ENCODE measurements at regions of chr6 and their contacts with region 1.

Region 1: DNA sequence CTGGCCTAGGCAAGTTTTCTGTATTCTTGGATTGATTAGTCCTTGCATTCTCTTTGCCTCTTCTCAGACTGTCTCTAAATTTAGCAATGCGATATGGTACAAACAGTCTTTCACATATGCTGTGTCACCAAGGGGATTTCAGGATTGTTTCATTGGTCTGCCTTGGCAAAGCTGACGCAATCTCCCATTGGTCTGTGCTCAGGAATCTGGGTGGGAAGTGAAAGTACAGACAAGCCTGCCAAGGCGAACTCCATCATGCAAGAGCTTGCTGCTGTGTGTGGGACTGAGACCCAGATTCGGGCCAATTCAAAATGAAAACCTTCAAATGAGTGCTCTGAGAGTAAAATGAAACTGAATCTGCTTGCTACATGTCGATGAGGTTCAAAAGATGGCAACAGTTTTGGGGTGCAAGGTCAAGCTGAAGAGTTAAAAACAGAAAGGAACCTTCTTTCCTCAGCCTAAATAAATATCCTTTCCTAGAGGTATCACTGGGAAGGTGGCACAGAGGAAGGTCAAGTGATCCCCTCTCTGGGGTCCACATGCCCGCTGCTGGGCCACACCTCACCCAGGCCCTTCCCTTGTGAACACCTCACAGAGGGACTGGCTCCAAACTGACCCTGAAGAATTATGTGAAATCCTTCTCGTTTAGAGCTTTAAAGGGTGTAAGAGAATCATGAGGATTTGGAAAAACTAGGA is 198.8 kb upstream of the PREP start:
- DNase-seq: peak; percentile 100
- H3K4me3 ChIP-seq: no peak overlapping the region
- H3K27ac ChIP-seq: peak overlapping the region; percentile 100
- H3K4me1 ChIP-seq: peaks cover 39% of the 10 kb centered on the region
- H3K27me3 ChIP-seq: no peaks in the 10 kb centered on the region
- CTCF ChIP-seq: no peak

Region 2: GRCh38 chr6:105522626-105523322 is 78.9 kb before region 1 on chr6:
- CTCF ChIA-PET with region 1: no interaction called
- dilution Hi-C with region 1: no loop called
- in situ Hi-C with region 1: no loop called
- intact Hi-C with region 1: loop called (anchors 1 kb)
- DNase-seq: peak; percentile 70
- H3K4me3 ChIP-seq: no peak overlapping the region
- H3K27ac ChIP-seq: peak overlapping the region; percentile 44
- H3K4me1 ChIP-seq: peaks cover 9% of the 10 kb centered on the region
- H3K27me3 ChIP-seq: no peaks in the 10 kb centered on the region
- CTCF ChIP-seq: no peak

Region 3: GRCh38 chr6:105648276-105648675 is 46.6 kb after region 1 on chr6:
- CTCF ChIA-PET with region 1: no interaction called
- dilution Hi-C with region 1: no loop called
- in situ Hi-C with region 1: no loop called
- intact Hi-C with region 1: no loop called
- DNase-seq: no peak
- H3K4me3 ChIP-seq: no peak overlapping the region
- H3K27ac ChIP-seq: no peak overlapping the region
- H3K4me1 ChIP-seq: peaks cover 11% of the 10 kb centered on the region
- H3K27me3 ChIP-seq: no peaks in the 10 kb centered on the region
- CTCF ChIP-seq: no peak

Region 4: DNA sequence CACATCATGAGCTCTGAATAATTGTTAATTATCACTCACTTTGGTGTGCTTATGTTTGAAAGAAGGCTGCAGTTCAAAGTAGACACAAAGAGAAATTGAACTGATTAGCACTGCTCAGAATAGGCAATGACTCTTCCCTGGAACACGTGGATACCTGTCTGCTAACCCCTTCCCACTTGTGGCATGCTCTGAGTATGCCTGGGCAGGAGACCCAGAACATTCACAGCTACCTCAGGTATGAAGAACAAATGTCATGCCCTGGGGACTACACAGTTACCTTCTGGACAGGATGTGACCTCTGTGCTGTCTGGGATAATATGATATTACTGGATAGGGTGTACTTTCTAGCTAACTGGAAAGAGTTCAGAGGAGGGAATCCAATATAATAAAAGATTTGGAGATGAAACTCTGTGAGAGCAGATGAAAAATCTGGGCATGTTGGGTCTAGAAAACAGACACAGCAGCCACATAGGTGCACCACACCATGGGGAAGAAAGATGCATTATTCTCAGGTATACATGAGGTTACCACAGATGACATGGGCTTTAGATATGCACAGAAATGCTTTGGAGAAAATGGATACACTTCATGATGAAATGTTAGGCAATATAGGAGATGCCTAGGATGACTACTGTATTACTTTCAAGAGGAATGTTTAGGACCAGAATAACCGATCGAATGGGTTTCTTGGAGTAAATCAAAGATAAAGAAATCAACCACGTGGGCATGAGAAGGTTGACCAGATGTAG is 125.4 kb after region 1 on chr6:
- CTCF ChIA-PET with region 1: no interaction called
- dilution Hi-C with region 1: no loop called
- in situ Hi-C with region 1: no loop called
- intact Hi-C with region 1: loop called (anchors 1 kb)
- DNase-seq: peak; percentile 89
- H3K4me3 ChIP-seq: no peak overlapping the region
- H3K27ac ChIP-seq: peak overlapping the region; percentile 95
- H3K4me1 ChIP-seq: peaks cover 22% of the 10 kb centered on the region
- H3K27me3 ChIP-seq: no peaks in the 10 kb centered on the region
- CTCF ChIP-seq: no peak

Region 5: GRCh38 chr6:105835373-105835772 is 233.7 kb after region 1 on chr6:
- CTCF ChIA-PET with region 1: no interaction called
- dilution Hi-C with region 1: no loop called
- in situ Hi-C with region 1: no loop called
- intact Hi-C with region 1: loop called (anchors 10 kb)
- DNase-seq: peak; percentile 64
- H3K4me3 ChIP-seq: no peak overlapping the region
- H3K27ac ChIP-seq: no peak overlapping the region
- H3K4me1 ChIP-seq: peaks cover 12% of the 10 kb centered on the region
- H3K27me3 ChIP-seq: no peaks in the 10 kb centered on the region
- CTCF ChIP-seq: peak; percentile 33 to 56